CD4-positive, alpha-beta memory T cell (primary cell): ENCODE measurements at regions of chr4 and their contacts with region 1.

Region 1: DNA sequence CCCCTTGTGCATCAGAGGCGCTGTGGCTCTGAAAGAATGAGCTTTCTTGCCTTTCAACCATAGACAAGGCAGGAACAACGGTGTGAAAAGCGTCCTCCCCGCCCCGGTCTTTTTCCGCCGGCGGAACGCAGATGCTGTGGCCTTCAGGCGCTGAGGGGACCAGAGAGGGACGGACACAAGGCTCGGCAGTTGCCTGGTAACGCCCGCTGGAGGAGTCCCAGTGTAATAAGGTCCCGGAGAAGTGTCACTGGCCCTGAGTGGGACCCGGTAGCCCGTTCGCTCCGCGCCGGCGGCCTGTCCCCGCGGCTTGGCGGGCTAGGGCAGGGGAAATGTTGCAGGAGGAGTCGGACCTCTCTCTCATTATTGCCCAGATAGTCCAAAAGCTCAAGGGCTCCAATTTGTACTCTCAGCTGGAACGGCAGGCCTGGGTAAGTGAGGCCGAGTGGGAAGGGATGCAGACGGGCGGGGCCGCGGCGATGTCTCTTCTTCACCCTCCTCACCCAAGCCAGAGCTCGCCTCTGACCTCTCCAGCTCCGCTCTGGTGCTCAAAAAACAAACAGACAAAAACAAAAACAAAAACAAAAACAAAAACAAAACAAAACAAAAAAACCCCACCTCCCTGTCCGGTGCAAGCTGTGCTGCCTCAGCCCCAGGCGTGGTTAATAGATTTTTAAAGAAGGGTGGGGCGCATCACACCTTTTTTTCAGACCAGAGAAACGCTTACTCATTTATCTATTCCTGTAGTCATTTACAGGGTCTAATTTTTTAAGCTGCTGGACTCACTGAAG is at the start of gene TBC1D19:
- DNase-seq: peak; percentile 87 to 90 (median 89)
- H3K4me3 ChIP-seq: peak within 1 kb of the TSS; percentile 44 to 75
- H3K4me3 Mint-ChIP-seq: peak within 1 kb of the TSS; percentile 91 to 99 (median 96)
- H3K27ac ChIP-seq: peak within 1 kb of the TSS; percentile 81
- H3K27ac Mint-ChIP-seq: peak within 1 kb of the TSS; percentile 89 to 99 (median 98)
- H3K4me1 ChIP-seq: peaks cover 17% of the 10 kb centered on the region
- H3K4me1 Mint-ChIP-seq: peaks cover 18 to 38% (median 26%) of the 10 kb centered on the region in 4 donors
- H3K27me3 ChIP-seq: no peaks in the 10 kb centered on the region
- H3K27me3 Mint-ChIP-seq: peaks cover 1 to 2% of the 10 kb centered on the region in 2 donors
- total RNA-seq, gene TBC1D19: 7.9 to 9.5 TPM

Region 2: DNA sequence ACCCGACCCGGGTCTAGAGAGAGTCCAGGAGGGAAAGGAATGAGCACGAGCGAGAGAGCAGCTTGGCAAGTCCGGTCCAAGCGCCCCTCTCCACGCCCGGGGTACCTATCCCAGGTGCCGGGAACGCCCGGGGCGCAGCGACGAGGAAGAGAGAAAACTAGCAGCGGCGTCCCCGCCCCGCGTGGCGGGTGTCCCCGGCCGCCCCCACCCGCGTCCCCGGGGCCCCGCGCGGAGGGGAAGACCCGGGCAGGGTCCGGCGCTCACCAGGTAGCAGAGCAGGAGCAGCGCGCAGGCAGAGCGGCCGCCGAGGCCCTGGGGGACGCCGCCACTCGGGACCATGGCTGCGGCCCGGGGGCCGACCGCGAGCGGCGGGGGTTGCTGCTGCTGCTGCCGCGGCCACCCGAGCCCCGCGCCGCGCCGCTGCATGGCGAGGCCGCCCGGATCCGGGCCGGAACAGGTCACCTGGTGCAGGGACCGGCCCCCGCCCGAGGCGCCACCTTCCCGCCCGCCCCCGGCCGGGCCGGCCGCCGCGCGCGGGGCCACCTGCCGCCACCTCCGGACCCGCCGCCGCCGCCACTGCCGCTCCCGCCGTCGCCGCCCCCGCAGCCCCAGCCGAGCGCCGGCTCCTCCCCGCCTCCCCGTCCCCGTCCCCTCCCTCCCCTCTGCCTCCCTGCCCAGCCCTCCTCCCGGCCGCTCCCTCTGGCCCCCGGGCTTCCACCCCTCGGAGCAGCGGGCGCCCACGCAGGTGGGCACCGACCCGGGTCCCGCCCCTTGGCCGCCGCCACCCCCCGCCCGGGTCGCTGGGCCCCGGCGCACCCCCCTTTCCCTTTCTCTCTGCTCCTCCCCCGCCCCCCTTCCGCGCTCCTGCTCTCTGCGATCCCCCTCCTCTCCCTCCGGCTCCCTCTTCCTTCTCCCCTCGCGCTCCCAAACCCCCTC is 721.4 kb before region 1 on chr4 and contains the start of gene SEL1L3:
- CTCF ChIA-PET with region 1: interaction called, 3 read pairs
- POLR2A ChIA-PET with region 1: interaction called, 4 read pairs
- intact Hi-C with region 1: loop called (anchors 5 kb)
- DNase-seq: peak; percentile 31 to 54 (median 43)
- H3K4me3 ChIP-seq: peak within 1 kb of the TSS; percentile 71 to 74
- H3K4me3 Mint-ChIP-seq: peak within 1 kb of the TSS; percentile 95 to 100 (median 98)
- H3K27ac ChIP-seq: peak within 1 kb of the TSS; percentile 87
- H3K27ac Mint-ChIP-seq: peak within 1 kb of the TSS; percentile 92 to 99 (median 94)
- H3K4me1 ChIP-seq: peaks cover 48% of the 10 kb centered on the region
- H3K4me1 Mint-ChIP-seq: peaks cover 33 to 50% (median 41%) of the 10 kb centered on the region in 4 donors
- H3K27me3 ChIP-seq: no peaks in the 10 kb centered on the region
- H3K27me3 Mint-ChIP-seq: no peaks in the 10 kb centered on the region
- total RNA-seq, gene SEL1L3: 61.4 to 64.3 TPM

Region 3: DNA sequence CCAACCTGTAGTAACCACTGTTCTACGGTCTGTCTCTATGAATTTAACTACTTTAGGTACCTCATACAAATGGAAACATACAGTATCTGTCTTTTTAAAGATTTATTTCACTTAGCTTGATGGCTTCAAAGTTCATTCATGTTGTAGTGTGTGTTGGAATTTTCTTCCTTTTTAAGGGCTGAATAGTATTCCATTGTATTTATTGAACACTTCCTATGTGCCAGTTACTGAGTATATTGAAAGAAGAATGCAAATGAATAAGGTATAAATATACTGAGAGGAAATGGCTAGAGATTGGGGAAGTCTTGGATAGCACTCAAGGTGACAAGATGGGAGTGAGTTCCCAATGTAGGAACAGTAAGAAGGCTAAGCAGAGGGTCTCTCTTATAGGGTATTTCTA is 17.1 kb after region 1 on chr4:
- CTCF ChIA-PET with region 1: interaction called, 3 read pairs
- POLR2A ChIA-PET with region 1: interaction called, 11 read pairs
- intact Hi-C with region 1: no loop called
- DNase-seq: no peak
- H3K4me3 ChIP-seq: no peak overlapping the region
- H3K4me3 Mint-ChIP-seq: no peak overlapping the region
- H3K27ac ChIP-seq: no peak overlapping the region
- H3K27ac Mint-ChIP-seq: no peak overlapping the region
- H3K4me1 ChIP-seq: no peaks in the 10 kb centered on the region
- H3K4me1 Mint-ChIP-seq: peaks cover 0 to 6% (median 3%) of the 10 kb centered on the region in 4 donors
- H3K27me3 ChIP-seq: no peaks in the 10 kb centered on the region
- H3K27me3 Mint-ChIP-seq: no peaks in the 10 kb centered on the region